Colonic mucosa (tissue), 4 donors: ENCODE measurements at regions of chr21 and their contacts with region 1.

Region 1: DNA sequence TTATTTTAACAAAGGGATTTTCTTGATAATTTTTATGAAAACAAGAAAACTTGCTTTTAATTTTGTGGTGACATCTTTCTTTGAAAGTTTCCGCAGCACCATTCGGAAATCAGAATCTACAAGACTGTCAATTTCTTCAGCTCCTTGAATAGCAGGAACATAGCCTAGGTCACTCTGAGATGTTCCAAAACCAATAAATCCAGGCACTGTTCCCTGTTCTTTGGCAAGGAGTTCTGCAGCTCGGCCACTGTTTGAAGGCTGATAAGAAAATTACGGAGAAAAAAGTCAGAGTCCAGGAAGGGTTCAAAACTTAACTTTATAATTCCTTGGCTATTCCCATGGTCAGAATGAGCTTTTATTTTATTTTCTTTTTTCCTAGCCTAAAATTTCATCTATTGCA is 6.0 kb downstream of the LTN1 start:
- DNase-seq: no peak
- H3K4me3 ChIP-seq: no peak overlapping the region
- H3K27ac ChIP-seq: no peak overlapping the region
- H3K4me1 ChIP-seq: peaks cover 5% of the 10 kb centered on the region
- H3K27me3 ChIP-seq: no peaks in the 10 kb centered on the region
- CTCF ChIP-seq: no peak

Region 2: GRCh38 chr21:28805885-28806284 is 180.8 kb before region 1 on chr21:
- intact Hi-C with region 1: no loop called
- DNase-seq: no peak
- H3K4me3 ChIP-seq: no peak overlapping the region
- H3K27ac ChIP-seq: no peak overlapping the region
- H3K4me1 ChIP-seq: no peaks in the 10 kb centered on the region
- H3K27me3 ChIP-seq: no peaks in the 10 kb centered on the region
- CTCF ChIP-seq: no peak

Region 3: GRCh38 chr21:28856588-28857250 is 130.0 kb before region 1 on chr21:
- intact Hi-C with region 1: no loop called
- DNase-seq: no peak
- H3K4me3 ChIP-seq: no peak overlapping the region
- H3K27ac ChIP-seq: no peak overlapping the region
- H3K4me1 ChIP-seq: no peaks in the 10 kb centered on the region
- H3K27me3 ChIP-seq: no peaks in the 10 kb centered on the region
- CTCF ChIP-seq: no peak

Region 4: GRCh38 chr21:29056005-29056404 is 69.3 kb after region 1 on chr21:
- intact Hi-C with region 1: loop called (anchors 10 kb)
- DNase-seq: no peak
- H3K4me3 ChIP-seq: no peak overlapping the region
- H3K27ac ChIP-seq: no peak overlapping the region
- H3K4me1 ChIP-seq: no peaks in the 10 kb centered on the region
- H3K27me3 ChIP-seq: no peaks in the 10 kb centered on the region
- CTCF ChIP-seq: no peak